PC-3 (cell line): ENCODE measurements at regions of chr11 and their contacts with region 1.

Region 1: GRCh38 chr11:9015677-9016076 is 11.9 kb upstream of the NRIP3 start:
- DNase-seq: peak; percentile 77
- ATAC-seq: peak; percentile 93
- H3K4me3 ChIP-seq: no peak overlapping the region
- H3K27ac ChIP-seq: no peak overlapping the region
- H3K4me1 ChIP-seq: no peaks in the 10 kb centered on the region
- H3K27me3 ChIP-seq: no peaks in the 10 kb centered on the region
- CTCF ChIP-seq: peak; percentile 76

Region 2: GRCh38 chr11:8126649-8127289 is 888.9 kb before region 1 on chr11:
- CTCF ChIA-PET with region 1: no interaction called
- POLR2A ChIA-PET with region 1: interaction called, 10 read pairs
- intact Hi-C with region 1: no loop called
- DNase-seq: no peak
- ATAC-seq: no peak
- H3K4me3 ChIP-seq: no peak overlapping the region
- H3K27ac ChIP-seq: no peak overlapping the region
- H3K4me1 ChIP-seq: no peaks in the 10 kb centered on the region
- H3K27me3 ChIP-seq: peaks cover 49% of the 10 kb centered on the region
- CTCF ChIP-seq: no peak

Region 3: DNA sequence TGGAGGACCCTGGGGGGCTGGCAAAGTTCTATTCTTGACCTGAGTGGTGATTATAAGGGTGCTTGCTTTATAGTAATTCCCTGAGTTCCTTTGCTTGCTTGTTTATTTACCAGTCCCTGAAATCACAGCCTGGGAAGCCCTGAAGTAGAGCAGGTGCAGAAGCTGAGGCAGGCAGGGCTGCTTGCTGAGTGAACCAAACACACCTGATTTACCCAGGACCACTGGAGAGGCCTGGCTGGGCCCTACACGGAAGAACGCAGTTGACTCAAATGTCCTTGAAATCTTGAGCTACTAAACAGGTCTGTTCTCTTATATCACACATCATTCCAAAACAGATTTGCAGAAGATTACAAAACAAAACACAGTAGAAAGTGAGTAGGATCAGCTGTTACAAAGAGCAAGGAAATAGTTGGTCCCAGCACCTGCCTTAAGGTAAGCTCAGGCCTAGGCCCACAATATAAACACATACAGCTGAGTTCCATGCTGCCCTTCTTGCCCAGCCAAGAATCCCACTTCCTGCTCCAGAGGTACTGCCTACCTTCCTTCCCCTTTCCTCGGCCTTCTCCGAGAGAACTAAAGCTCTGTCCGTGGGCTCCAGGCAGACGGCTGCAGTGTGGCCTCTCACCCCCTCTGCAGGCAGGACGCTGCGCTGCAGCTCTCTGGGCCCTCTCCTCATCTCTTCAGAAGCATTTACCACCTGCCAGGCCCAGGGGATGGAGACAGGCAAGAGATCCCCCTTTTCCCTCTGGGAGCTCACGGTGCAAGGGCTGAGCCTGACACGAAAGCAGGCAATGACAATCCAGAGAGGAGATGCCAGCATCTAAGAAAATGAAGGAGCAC is 121.8 kb after region 1 on chr11:
- CTCF ChIA-PET with region 1: interaction called, 20 read pairs
- POLR2A ChIA-PET with region 1: no interaction called
- intact Hi-C with region 1: loop called (anchors 1 kb)
- DNase-seq: peak; percentile 72
- ATAC-seq: peak; percentile 64
- H3K4me3 ChIP-seq: no peak overlapping the region
- H3K27ac ChIP-seq: no peak overlapping the region
- H3K4me1 ChIP-seq: peaks cover 27% of the 10 kb centered on the region
- H3K27me3 ChIP-seq: no peaks in the 10 kb centered on the region
- CTCF ChIP-seq: peak; percentile 94

Region 4: DNA sequence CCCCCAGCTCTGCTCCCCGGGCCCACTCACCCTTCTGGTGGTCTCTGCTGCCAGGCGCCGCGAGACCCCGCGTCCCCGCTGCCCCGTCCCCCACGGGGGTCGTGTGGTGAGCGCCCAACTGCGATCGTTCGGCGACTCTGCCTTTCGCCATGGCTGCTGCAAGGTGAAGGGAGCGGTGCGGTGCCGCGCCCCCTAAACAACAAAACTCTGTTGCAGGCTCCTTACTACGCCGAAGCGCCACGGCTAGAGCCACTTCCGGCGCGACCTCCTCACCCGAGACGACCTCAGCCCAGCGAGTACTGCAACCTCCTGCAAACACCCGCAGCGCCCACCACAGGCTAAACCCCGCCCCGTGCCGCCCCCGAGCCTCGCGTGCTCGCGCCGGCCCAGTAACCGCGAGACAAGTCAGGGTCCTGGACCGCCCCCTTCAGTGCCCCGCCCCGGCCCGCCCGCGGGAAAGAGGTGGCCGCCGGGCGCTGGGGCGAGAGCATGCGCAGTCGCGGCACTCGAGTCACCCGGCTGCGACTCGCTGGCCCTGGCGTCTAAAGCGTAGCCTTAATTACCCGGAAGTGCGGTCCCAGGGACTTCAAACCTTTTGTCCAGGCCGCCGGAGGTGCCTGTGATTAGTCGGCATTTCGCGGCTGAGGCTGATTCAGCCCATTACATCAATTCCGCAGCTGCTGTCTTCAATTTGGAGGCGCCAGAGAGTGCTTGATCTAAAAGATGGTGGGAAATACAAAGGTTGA is 298.8 kb after region 1 on chr11 and contains the start of gene TMEM41B:
- CTCF ChIA-PET with region 1: no interaction called
- POLR2A ChIA-PET with region 1: interaction called, 16 read pairs
- intact Hi-C with region 1: no loop called
- DNase-seq: peak; percentile 96
- ATAC-seq: peak; percentile 96
- H3K4me3 ChIP-seq: peak within 1 kb of the TSS; percentile 98
- H3K27ac ChIP-seq: peak within 1 kb of the TSS; percentile 86
- H3K4me1 ChIP-seq: peaks cover 17% of the 10 kb centered on the region
- H3K27me3 ChIP-seq: no peaks in the 10 kb centered on the region
- CTCF ChIP-seq: peak; percentile 25; the same call in 1 of the 2 replicates
- total RNA-seq, gene TMEM41B: 83.6 and 87.6 TPM in 2 replicates

Region 5: DNA sequence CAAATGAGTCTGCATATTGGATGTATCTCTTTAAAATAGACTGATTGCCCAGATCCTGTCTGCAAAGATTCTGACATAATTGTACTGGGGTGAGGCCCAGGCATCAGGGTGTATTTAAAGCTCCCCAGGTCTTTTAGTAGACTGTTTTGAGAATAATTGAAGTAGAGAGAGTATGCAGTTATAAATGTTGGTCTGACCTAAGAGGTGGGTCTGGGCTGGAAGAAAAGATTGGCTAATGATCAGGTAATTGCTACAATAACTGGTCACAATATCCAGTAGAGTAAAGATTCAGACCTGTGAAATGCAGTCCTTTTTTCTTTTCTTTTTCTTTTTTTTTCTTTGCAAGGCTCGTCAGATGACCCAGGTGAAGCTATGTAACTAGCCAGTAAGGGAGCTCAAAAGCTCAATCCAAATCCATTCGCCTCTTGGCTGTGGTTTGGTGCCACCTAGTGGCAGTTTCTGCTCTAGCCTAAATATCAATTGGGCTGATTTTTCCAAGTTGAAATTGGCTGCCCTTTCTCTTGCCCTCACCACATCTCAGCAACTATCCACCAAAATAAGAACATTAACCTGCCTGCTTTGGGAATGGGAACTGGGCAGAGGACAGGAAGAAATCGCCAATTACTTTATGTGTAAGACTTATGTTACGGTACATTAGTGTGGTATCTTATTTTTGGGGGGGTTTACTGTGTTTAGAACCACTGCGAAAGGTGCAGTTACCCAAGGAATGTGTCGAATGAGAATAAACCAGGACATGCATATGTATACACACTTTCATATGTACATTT is 491.0 kb after region 1 on chr11:
- CTCF ChIA-PET with region 1: interaction called, 7 read pairs
- POLR2A ChIA-PET with region 1: no interaction called
- intact Hi-C with region 1: loop called (anchors 2 kb)
- DNase-seq: peak; percentile 90
- ATAC-seq: peak; percentile 88
- H3K4me3 ChIP-seq: no peak overlapping the region
- H3K27ac ChIP-seq: no peak overlapping the region
- H3K4me1 ChIP-seq: no peaks in the 10 kb centered on the region
- H3K27me3 ChIP-seq: no peaks in the 10 kb centered on the region
- CTCF ChIP-seq: peak; percentile 91